HEK293 (cell line): ENCODE measurements at regions of chr2 and their contacts with region 1.

Region 1: DNA sequence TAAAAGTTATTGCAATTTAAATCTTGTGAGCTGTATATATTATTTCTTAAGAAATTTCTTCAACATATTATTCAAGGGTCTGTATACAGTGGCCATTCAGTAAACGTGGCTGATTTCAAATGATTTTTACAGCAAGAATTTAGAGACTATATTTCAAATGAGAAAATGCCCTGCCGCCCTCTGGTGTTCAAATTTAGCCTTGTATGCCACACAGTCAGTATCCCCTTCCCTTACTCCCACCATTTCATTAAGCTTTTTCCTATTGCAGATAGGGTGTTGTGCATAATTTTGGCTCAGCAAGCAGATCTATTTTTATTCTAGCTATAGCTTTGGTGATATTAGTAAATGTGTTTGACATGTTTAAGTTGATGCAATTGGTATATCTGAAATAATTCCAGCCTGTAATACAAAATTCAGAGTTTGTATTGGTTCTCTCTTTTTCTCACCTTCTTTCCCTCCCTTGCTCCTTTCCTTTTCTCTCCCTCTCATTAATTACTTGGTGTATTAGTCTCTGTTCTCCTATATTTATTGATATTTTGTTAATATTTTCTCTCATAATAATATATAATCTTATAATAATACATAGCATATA is 22.8 kb upstream of the SCN7A start:
- H3K4me3 ChIP-seq: no peak overlapping the region
- H3K27ac ChIP-seq: no peak overlapping the region
- H3K4me1 ChIP-seq: no peaks in the 10 kb centered on the region
- CTCF ChIP-seq: peak; percentile 42; the same call in 1 of the 2 replicates

Region 2: GRCh38 chr2:166494140-166494624 is 22.6 kb before region 1 on chr2 and contains the start of gene SCN7A:
- CTCF ChIA-PET with region 1: interaction called, 10 read pairs
- POLR2A ChIA-PET with region 1: no interaction called
- H3K4me3 ChIP-seq: peak within 1 kb of the TSS; percentile 35
- H3K27ac ChIP-seq: no peak within 1 kb of the TSS
- H3K4me1 ChIP-seq: no peaks in the 10 kb centered on the region
- CTCF ChIP-seq: no peak

Region 3: GRCh38 chr2:166610180-166610912 is 93.5 kb after region 1 on chr2:
- CTCF ChIA-PET with region 1: no interaction called
- POLR2A ChIA-PET with region 1: no interaction called
- H3K4me3 ChIP-seq: no peak overlapping the region
- H3K27ac ChIP-seq: no peak overlapping the region
- H3K4me1 ChIP-seq: no peaks in the 10 kb centered on the region
- CTCF ChIP-seq: no peak

Region 4: DNA sequence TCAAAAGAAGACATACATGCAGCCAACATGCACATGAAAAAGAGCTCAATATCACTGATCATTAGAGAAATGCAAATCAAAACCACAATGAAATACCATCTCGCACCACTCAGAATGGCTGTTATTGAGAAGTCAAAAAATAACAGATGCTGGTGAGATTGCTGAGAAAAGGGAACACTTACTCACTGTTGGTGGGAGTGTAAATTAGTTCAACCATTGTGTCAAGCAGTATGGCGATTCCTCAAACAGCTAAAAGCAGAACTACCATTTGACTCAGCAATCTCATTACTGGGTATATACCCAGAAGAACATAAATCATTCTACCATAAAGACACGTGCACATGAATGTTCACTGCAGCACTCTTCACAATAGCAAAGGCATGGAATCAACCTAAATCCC is 276.0 kb after region 1 on chr2:
- CTCF ChIA-PET with region 1: no interaction called
- POLR2A ChIA-PET with region 1: no interaction called
- H3K4me3 ChIP-seq: no peak overlapping the region
- H3K27ac ChIP-seq: no peak overlapping the region
- H3K4me1 ChIP-seq: no peaks in the 10 kb centered on the region
- CTCF ChIP-seq: no peak